Motor neuron (in vitro differentiated cells): ENCODE measurements at regions of chr3 and their contacts with region 1.

Region 1: DNA sequence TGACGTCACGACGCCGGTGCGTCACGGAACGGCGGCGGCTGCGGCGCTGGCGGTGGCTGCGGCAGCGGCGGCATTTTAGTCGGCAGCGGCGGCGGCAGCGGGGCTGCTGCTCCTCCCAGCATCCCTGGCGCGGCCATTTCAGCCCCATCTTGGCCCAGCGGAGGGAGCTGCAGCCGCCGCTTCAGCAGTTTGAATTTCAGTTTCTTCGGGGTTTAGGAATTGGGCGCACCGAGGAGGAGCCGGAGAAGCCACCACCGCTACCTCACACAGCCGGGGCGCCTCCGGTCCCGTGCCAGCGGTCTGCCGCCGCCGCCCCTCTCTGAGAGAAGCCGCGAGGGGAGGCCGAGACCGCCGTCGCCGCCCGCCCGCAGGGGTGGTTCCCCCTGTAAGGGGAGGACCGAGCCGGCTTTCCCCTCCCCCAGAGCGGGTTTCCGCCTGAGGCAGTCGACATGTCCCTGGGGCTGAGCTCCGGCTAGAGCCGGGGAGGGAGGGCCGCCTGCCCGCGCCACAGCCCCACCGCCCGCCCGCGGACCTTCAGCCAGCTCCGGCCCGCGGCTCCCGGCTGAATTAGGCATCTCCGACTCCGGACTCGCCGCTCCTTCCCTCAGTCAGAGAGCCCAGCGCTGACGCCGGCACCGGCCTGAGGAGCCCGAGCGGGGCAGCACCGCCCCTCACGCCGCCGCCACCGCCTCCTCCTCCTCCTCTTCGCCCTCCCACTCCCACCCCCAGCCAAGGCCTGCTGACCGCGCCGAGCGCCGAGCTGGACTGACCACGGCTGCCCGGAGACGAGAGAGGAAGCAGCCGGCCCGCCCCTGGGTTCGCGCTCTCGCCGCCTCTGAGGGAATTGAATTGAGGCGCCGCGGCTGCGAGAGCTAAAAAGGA is at the start of gene TSC22D2:
- ATAC-seq: peak; percentile 54 to 81 (median 70)
- H3K4me3 ChIP-seq: peak within 1 kb of the TSS; percentile 65 to 79 (median 69)
- H3K27ac ChIP-seq: peak within 1 kb of the TSS; percentile 93 to 95
- H3K4me1 ChIP-seq: peaks cover 6 to 7% of the 10 kb centered on the region in 2 donors
- total RNA-seq, gene TSC22D2: 10.1 to 33.8 (median 19.1) TPM

Region 2: DNA sequence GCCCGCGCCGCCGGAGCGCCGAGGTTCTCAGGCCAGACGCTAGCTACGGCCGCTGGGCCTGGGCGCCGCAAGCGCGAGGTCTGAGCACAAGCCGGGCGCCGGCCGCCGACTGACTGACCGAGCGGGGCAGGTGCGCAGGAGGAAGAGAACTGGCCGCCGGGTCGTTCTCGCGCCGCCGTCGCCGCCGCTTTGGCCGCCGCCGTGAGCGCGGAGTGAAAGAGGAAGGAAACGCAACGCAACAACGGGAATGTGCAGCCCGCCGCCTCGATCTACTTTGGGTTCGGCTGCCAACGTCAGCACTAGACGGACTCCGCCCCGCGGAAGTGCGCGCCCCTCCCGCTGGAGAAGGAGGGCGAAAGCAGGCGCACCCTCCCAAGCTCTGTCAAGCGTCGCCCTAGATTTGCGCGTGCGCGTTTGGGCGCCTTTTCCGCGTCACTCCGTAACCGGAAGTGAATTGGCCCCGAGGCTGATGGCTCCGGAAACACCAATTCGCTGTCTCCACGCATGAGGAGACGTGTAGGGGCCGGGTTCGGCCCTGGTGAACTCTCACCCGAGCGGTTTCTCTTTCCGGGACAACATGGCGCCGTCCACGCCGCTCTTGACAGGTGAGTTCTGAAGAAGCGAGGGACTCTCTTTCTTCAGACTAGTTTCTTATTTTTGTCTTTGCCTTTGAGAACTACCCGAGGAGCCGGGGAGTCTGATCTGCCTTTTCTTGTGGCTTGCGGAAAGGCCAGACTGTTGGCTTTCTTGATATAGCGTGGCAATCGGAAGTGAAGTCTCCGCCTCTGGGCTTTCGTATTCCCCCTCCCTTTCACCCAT is 138.0 kb after region 1 on chr3 and contains the starts of genes EIF2A and SERP1:
- in situ Hi-C with region 1: loop called in 1 of 9 experiments (anchors 25 kb)
- ATAC-seq: peak; percentile 86 to 95 (median 94)
- H3K4me3 ChIP-seq: peak within 1 kb of the TSS; percentile 56 to 92 (median 73)
- H3K27ac ChIP-seq: peak within 1 kb of the TSS; percentile 97
- H3K4me1 ChIP-seq: peaks cover 0 to 10% of the 10 kb centered on the region in 2 donors
- total RNA-seq, gene EIF2A: 61.7 to 128 (median 97.5) TPM
- total RNA-seq, gene SERP1: 61.9 to 109 (median 85.0) TPM

Region 3: GRCh38 chr3:150830094-150830681 is 421.7 kb after region 1 on chr3:
- in situ Hi-C with region 1: no loop called
- ATAC-seq: peak in 3 of 8 experiments; percentile 20 to 64 (median 26)
- H3K4me3 ChIP-seq: no peak overlapping the region
- H3K27ac ChIP-seq: no peak overlapping the region
- H3K4me1 ChIP-seq: no peaks in the 10 kb centered on the region